ENCODE measurements at regions of chr6 and their contacts with region 1.

Region 1: GRCh38 chr6:31702819-31703522 is at the start of gene ABHD16A:
- DNase-seq: peak; percentile 95 to 96
- H3K4me3 ChIP-seq: peak within 1 kb of the TSS; percentile 69 to 94 (median 90)
- H3K27ac ChIP-seq: peak within 1 kb of the TSS; percentile 89; the same call in 1 of the 2 replicates
- H3K4me1 ChIP-seq: peaks cover 2 to 5% (median 3%) of the 10 kb centered on the region in 4 experiments; a peak in 4 of 7 replicates
- H3K27me3 ChIP-seq: no peaks in the 10 kb centered on the region
- CTCF ChIP-seq: no peak
- EP300 ChIP-seq: peak; percentile 23 to 88
- POLR2A ChIP-seq: peak in 1 of 2 experiments; percentile 85; a peak in 2 of 3 replicates
- RAD21 ChIP-seq: no peak
- total RNA-seq, gene ABHD16A: 29.3 and 32.9 TPM in 2 replicates

Region 2: DNA sequence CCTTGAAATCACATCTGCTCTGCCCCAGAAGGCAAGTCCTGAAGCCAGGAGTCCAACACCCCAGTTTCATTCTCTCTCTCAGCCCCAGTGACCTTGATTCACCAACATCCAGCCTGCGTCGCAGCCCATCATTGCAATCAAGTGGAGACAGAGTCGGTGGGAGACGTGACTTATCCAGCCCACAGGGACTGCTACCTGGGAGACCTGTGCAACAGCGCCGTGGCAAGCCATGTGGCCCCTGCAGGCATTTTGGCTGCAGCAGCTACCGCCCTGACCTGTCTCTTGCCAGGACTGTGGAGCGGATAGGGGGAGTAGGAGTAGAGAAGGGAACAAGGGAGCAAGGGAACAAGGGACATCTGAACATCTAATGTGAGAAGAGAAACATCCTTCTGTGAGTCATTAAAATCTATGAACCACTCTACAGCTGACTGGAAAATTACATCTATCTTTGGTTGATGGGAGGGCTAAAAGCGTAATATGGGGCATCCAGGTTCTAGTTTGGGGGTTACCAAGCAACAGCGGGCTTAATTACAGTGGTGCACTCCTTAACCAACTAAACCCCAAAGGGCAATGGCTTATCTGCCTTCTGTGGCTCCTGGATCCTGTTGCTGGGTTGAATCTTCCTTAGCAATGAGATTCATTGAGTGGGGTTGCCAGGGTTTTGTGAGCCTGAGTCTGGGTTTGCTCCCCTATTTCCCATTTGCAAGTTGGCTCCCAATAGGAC is 14.7 kb after region 1 on chr6:
- CTCF ChIA-PET with region 1: interaction called, 6 read pairs
- POLR2A ChIA-PET with region 1: interaction called, 36 read pairs
- DNase-seq: no peak
- H3K4me3 ChIP-seq: 0 out of 8 replicates have a peak overlapping the region, but pooled peaks of 1 of the 4 experiments have one; percentile 9
- H3K27ac ChIP-seq: no peak overlapping the region
- H3K4me1 ChIP-seq: peaks cover 11 to 29% (median 27%) of the 10 kb centered on the region in 4 experiments
- H3K27me3 ChIP-seq: no peaks in the 10 kb centered on the region; a peak in 1 of 7 replicates
- CTCF ChIP-seq: peak; percentile 52 to 74 (median 72); a peak in 3 of 4 replicates
- EP300 ChIP-seq: no peak
- POLR2A ChIP-seq: no peak
- RAD21 ChIP-seq: peak; percentile 50 to 56; a peak in 3 of 4 replicates